PC-3 (cell line): ENCODE measurements at regions of chr10 and their contacts with region 1.

Region 1: GRCh38 chr10:65394902-65395301 is 1530.9 kb upstream of the LRRTM3 start:
- DNase-seq: peak; percentile 93
- ATAC-seq: peak; percentile 98
- H3K4me3 ChIP-seq: no peak overlapping the region
- H3K27ac ChIP-seq: peak overlapping the region; percentile 27
- H3K4me1 ChIP-seq: peaks cover 16% of the 10 kb centered on the region
- H3K27me3 ChIP-seq: no peaks in the 10 kb centered on the region
- CTCF ChIP-seq: no peak

Region 2: DNA sequence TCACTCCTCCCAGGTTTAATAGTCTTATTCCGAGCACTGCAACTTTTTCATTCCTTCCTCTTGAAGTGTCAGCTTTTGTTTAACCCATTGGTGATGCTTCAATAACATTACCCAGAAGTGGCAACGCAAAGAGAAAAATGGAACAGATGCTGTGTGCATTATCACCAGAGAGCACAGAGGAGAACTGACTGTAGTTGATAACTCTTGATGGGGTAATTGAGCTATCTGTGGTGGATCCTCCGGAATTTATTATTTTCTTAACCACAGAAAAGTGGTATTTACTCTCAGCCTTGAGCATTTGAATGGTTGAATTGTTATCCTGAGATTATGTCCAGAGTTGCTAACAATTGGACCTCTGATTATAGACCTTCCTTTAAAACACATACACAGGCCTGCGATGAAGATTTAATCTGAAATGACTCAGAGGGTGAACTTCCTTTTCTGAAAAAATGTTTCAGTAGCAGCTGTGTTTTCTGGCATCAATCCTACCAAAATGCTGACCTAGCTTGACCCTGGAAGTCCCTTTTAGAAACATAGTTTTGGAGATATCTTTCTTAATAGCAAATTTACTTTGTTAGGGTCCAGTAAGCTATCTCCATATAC is 53.5 kb before region 1 on chr10:
- CTCF ChIA-PET with region 1: no interaction called
- POLR2A ChIA-PET with region 1: no interaction called
- intact Hi-C with region 1: no loop called
- DNase-seq: peak; percentile 90
- ATAC-seq: peak; percentile 90
- H3K4me3 ChIP-seq: no peak overlapping the region
- H3K27ac ChIP-seq: peak overlapping the region; percentile 29
- H3K4me1 ChIP-seq: peaks cover 27% of the 10 kb centered on the region
- H3K27me3 ChIP-seq: no peaks in the 10 kb centered on the region
- CTCF ChIP-seq: no peak

Region 3: DNA sequence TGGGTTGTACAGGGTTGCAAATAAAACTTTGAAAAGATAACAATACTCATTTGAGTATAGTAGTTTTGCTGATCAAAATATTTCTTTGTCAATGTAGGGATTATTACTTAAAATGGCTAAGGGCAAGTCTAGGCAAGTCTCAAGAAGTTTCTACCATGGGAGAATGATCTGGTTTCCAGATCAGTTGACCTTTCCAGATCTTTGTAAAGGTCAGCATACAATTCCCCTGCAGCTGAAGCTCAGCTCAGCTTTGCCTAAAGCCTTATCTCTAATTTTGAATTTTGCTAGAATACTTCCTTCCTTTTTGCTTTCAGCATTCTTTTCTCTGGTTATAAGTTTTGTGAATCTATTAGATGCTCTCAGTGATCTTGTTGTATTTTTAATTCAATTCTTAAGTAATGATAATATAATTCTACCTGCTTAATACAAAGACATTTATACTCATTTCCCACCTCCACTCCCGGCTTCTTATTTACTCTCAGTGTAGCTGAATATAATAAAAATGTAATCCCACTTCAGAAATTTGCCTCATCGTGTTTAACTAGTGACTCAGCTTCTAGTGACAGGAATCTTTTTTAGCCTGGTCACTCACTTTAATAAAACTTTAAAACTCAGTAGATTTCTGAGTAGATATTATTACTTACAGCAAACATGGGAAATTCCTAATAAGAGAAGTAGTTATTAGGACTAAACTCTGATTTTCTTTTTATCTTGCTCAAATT is 24.6 kb after region 1 on chr10:
- CTCF ChIA-PET with region 1: no interaction called
- POLR2A ChIA-PET with region 1: no interaction called
- intact Hi-C with region 1: loop called (anchors 1 kb)
- DNase-seq: peak; percentile 92
- ATAC-seq: peak; percentile 98
- H3K4me3 ChIP-seq: no peak overlapping the region
- H3K27ac ChIP-seq: peak overlapping the region; percentile 60
- H3K4me1 ChIP-seq: peaks cover 15% of the 10 kb centered on the region
- H3K27me3 ChIP-seq: no peaks in the 10 kb centered on the region
- CTCF ChIP-seq: no peak

Region 4: GRCh38 chr10:65742906-65743305 is 348.0 kb after region 1 on chr10:
- CTCF ChIA-PET with region 1: no interaction called
- POLR2A ChIA-PET with region 1: no interaction called
- intact Hi-C with region 1: no loop called
- DNase-seq: no peak
- ATAC-seq: no peak
- H3K4me3 ChIP-seq: no peak overlapping the region
- H3K27ac ChIP-seq: no peak overlapping the region
- H3K4me1 ChIP-seq: no peaks in the 10 kb centered on the region
- H3K27me3 ChIP-seq: no peaks in the 10 kb centered on the region
- CTCF ChIP-seq: no peak